GM12878 (cell line): ENCODE measurements at regions of chr1 and their contacts with region 1.

Region 1: DNA sequence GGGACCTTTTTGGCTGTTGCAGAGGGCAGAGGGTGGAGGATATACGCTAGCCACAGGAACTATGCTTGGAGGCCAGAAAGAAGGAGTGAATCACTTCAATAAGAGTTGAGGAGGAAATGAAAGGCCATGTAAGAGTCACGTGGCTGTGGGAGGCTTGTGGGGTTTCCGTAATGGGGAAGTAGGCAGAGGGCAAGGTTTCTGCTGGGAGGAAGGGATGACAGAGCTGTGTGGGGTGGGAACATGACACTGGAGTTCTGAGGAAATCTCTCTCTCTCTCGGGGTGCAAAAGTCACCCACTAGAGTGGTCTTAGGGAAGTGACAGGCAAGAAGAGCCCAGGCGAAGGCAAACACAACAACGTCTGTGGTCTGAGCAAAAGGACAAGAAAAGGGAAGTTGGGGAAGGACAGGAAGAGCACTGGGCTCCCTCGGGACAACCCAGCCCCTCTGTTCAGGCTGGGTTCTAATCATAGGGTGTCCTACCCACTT is 3.9 kb upstream of the CD1C start:
- DNase-seq: peak; percentile 79
- ATAC-seq: peak; percentile 75
- H3K4me3 ChIP-seq: no peak overlapping the region
- H3K27ac ChIP-seq: peak overlapping the region; percentile 88
- H3K4me1 ChIP-seq: peaks cover 57% of the 10 kb centered on the region
- H3K27me3 ChIP-seq: no peaks in the 10 kb centered on the region
- CTCF ChIP-seq: no peak
- EP300 ChIP-seq: peak; percentile 51 to 60; a peak in 1 of 4 replicates
- POLR2A ChIP-seq: peak; percentile 31; the same call in 1 of the 2 replicates
- RAD21 ChIP-seq: no peak

Region 2: DNA sequence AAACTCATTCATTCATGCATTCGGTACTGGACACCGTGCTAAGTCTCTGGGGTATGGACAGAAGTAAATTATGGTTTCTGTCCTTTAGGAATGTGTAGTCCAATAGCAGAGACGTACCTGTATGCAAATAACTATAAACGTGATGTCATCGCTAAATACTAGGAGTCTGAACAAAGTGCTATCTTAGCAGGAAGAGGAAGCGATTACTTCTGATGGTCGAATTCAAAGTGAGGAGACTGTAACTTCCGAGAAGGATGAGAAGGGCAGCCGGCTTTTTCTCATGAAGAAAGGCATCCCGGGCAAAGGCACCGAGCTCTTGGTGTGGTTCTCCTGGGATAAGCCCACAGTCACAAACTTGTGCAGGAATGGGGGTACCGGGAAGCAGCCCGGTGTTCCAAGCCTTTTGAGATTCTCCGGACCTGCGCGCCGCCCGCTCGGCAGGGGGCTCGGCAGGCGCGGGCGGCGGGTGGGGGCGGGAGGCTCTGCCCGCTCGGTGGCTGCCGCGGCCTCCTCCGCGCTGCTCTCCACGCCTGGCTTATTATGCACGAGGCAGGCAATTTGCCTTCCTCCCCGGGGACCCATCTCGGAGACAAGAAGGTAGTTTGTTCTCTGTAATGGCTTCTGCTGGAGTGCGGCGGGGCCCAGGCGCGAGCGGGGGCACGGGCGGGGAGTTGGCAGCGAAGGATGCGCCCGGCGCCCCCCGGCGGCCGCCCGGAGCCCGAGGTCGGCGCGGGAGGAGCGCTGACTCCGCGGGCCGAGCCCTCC is 172.6 kb before region 1 on chr1:
- CTCF ChIA-PET with region 1: no interaction called
- POLR2A ChIA-PET with region 1: no interaction called
- RAD21 ChIA-PET with region 1: no interaction called
- SMC1A ChIA-PET with region 1: no interaction called
- in situ Hi-C with region 1: no loop called
- intact Hi-C with region 1: no loop called
- DNase-seq: no peak
- ATAC-seq: peak; percentile 12; the same call in 1 of the 3 replicates
- H3K4me3 ChIP-seq: no peak overlapping the region
- H3K27ac ChIP-seq: no peak overlapping the region
- H3K4me1 ChIP-seq: no peaks in the 10 kb centered on the region
- H3K27me3 ChIP-seq: peaks cover 5 to 19% of the 10 kb centered on the region in 2 experiments
- CTCF ChIP-seq: no peak
- EP300 ChIP-seq: no peak
- POLR2A ChIP-seq: no peak
- RAD21 ChIP-seq: no peak

Region 3: DNA sequence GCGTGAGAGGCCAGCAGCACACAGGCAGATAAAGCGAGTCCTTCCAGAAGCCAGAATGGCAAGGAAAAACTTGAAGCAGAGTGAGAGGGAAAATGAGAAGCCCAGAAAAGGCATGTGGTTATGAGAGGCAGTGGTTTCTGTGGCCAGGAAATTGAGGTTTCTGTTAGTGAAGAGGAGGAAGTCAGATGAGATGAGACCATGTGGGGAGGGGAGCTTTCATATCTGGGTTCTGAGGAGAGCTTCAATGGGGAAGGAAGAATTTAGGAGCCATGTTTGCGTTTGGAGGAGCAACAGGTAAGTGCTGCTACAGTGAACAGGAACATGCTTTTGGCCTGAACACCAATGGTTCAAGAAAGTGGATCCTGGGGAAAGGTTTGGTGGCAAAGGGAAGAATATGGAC is 37.7 kb before region 1 on chr1:
- CTCF ChIA-PET with region 1: interaction called, 8 read pairs
- POLR2A ChIA-PET with region 1: interaction called, 5 read pairs
- RAD21 ChIA-PET with region 1: interaction called, 17 read pairs
- SMC1A ChIA-PET with region 1: interaction called, 7 read pairs
- in situ Hi-C with region 1: no loop called
- intact Hi-C with region 1: no loop called
- DNase-seq: peak; percentile 13
- ATAC-seq: peak; percentile 71
- H3K4me3 ChIP-seq: no peak overlapping the region
- H3K27ac ChIP-seq: no peak overlapping the region
- H3K4me1 ChIP-seq: peaks cover 9% of the 10 kb centered on the region
- H3K27me3 ChIP-seq: no peaks in the 10 kb centered on the region
- CTCF ChIP-seq: no peak
- EP300 ChIP-seq: no peak
- POLR2A ChIP-seq: no peak
- RAD21 ChIP-seq: no peak

Region 4: DNA sequence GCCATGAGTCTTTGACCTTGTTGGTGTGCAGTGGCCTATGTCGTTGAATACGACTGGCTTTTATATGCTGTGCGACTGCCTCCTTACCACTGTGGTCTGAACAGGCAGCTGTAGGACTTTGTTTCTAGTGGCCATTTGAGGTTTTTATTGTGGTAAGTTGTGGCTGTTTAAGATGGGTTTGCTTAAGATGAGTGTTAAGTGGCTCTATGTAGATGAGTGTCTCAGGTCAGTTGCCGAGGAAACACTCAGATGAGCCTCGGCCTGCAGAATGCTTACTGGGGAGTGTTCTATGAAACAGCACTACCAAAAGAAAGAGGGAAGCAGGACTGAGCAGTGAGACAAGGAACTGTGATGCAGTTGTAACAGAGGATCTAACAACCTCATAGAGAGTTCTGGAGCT is 11.0 kb before region 1 on chr1:
- CTCF ChIA-PET with region 1: interaction called, 9 read pairs
- POLR2A ChIA-PET with region 1: no interaction called
- RAD21 ChIA-PET with region 1: interaction called, 29 read pairs
- SMC1A ChIA-PET with region 1: interaction called, 31 read pairs
- in situ Hi-C with region 1: no loop called
- intact Hi-C with region 1: no loop called
- DNase-seq: no peak
- ATAC-seq: peak; percentile 94
- H3K4me3 ChIP-seq: no peak overlapping the region
- H3K27ac ChIP-seq: no peak overlapping the region
- H3K4me1 ChIP-seq: no peaks in the 10 kb centered on the region; the same call in 1 of the 2 replicates
- H3K27me3 ChIP-seq: no peaks in the 10 kb centered on the region
- CTCF ChIP-seq: no peak
- EP300 ChIP-seq: no peak
- POLR2A ChIP-seq: no peak
- RAD21 ChIP-seq: no peak

Region 5: DNA sequence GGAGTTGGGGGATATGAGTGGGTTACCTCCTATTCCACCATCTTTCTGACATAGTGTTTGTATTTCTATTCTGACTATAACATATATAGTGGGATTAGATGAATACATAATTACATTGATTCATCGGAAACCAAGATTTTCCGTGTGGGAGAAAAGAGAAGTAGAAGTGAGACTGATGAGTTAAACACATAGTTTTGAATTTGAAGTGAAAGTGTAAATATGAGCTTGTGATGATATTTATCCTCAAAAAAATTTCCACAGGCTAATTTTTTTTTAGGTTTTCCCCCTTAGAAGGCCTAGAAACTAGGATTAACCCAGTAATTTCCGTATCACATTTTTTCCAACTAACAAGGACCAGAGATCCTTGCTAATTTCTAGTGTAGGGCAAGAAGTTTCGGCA is 38.6 kb after region 1 on chr1:
- CTCF ChIA-PET with region 1: interaction called, 16 read pairs
- POLR2A ChIA-PET with region 1: no interaction called
- RAD21 ChIA-PET with region 1: interaction called, 11 read pairs
- SMC1A ChIA-PET with region 1: interaction called, 15 read pairs
- in situ Hi-C with region 1: no loop called
- intact Hi-C with region 1: no loop called
- DNase-seq: no peak
- ATAC-seq: peak; percentile 47
- H3K4me3 ChIP-seq: no peak overlapping the region
- H3K27ac ChIP-seq: no peak overlapping the region
- H3K4me1 ChIP-seq: peaks cover 9% of the 10 kb centered on the region
- H3K27me3 ChIP-seq: no peaks in the 10 kb centered on the region
- CTCF ChIP-seq: no peak
- EP300 ChIP-seq: no peak; a peak in 1 of 4 replicates
- POLR2A ChIP-seq: no peak
- RAD21 ChIP-seq: no peak

Region 6: DNA sequence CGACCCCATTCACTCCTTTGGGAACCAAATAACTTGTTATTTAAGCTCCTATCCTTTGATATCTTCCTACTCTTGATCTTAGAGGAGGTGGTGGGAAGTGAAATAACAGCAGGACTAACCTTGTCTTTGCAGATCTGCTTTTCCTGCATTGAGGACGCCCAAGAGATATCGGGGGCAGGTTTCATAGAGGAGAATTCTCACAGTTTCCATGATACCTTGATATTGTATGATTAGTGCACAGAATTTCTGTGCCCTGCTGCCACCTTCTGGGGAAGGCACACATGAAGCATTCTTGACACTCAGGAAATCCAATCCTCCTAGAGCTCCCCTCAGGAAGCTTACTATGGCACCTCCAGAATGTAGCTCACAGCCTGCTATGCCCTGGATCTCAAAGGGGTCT is 43.9 kb after region 1 on chr1:
- CTCF ChIA-PET with region 1: interaction called, 16 read pairs
- POLR2A ChIA-PET with region 1: no interaction called
- RAD21 ChIA-PET with region 1: interaction called, 11 read pairs
- SMC1A ChIA-PET with region 1: interaction called, 15 read pairs
- in situ Hi-C with region 1: no loop called
- intact Hi-C with region 1: no loop called
- DNase-seq: no peak
- ATAC-seq: peak; percentile 84
- H3K4me3 ChIP-seq: no peak overlapping the region
- H3K27ac ChIP-seq: no peak overlapping the region
- H3K4me1 ChIP-seq: peaks cover 5% of the 10 kb centered on the region
- H3K27me3 ChIP-seq: no peaks in the 10 kb centered on the region
- CTCF ChIP-seq: peak; percentile 61 to 69 (median 63)
- EP300 ChIP-seq: no peak
- POLR2A ChIP-seq: no peak
- RAD21 ChIP-seq: peak; percentile 80

Region 7: GRCh38 chr1:158485455-158485854 is 199.7 kb after region 1 on chr1:
- CTCF ChIA-PET with region 1: no interaction called
- POLR2A ChIA-PET with region 1: no interaction called
- RAD21 ChIA-PET with region 1: no interaction called
- SMC1A ChIA-PET with region 1: no interaction called
- in situ Hi-C with region 1: no loop called
- intact Hi-C with region 1: no loop called
- DNase-seq: no peak
- ATAC-seq: no peak
- H3K4me3 ChIP-seq: no peak overlapping the region
- H3K27ac ChIP-seq: no peak overlapping the region
- H3K4me1 ChIP-seq: no peaks in the 10 kb centered on the region
- H3K27me3 ChIP-seq: no peaks in the 10 kb centered on the region
- CTCF ChIP-seq: no peak
- EP300 ChIP-seq: no peak
- POLR2A ChIP-seq: no peak
- RAD21 ChIP-seq: no peak

Region 8: DNA sequence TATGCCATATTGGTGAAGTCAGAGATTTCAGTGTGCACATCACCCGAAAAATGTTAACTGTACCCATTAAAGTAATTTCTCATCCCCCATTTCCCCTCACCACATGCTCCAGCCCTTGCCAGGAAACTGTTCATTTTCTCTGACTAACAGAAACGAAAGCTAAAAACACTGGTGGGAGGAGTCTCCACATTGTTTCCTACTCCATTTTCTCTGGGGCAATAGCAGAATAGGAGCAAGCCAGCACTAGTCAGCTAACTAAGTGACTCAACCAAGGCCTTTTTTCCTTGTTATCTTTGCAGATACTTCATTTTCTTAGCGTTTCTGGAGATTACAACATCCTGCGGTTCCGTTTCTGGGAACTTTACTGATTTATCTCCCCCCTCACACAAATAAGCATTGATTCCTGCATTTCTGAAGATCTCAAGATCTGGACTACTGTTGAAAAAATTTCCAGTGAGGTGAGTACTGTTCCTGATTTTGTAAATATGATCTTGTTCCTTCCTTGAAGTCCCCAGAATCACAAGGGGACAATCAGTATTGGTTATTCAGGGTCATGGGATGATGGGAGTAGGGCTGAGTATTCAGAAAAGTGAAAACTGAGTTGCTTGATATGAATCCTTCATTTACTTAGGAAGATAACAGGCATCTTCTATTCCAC is 724.0 kb after region 1 on chr1 and contains the start of gene IFI16:
- CTCF ChIA-PET with region 1: no interaction called
- POLR2A ChIA-PET with region 1: no interaction called
- RAD21 ChIA-PET with region 1: no interaction called
- SMC1A ChIA-PET with region 1: no interaction called
- in situ Hi-C with region 1: loop called (anchors 10 kb)
- intact Hi-C with region 1: loop called (anchors 2 kb)
- DNase-seq: peak; percentile 87
- ATAC-seq: peak; percentile 73
- H3K4me3 ChIP-seq: peak within 1 kb of the TSS; percentile 91
- H3K27ac ChIP-seq: peak within 1 kb of the TSS; percentile 100
- H3K4me1 ChIP-seq: peaks cover 15% of the 10 kb centered on the region; the same call in 1 of the 2 replicates
- H3K27me3 ChIP-seq: no peaks in the 10 kb centered on the region
- CTCF ChIP-seq: no peak
- EP300 ChIP-seq: peak; percentile 25 to 37; a peak in 1 of 4 replicates
- POLR2A ChIP-seq: peak; percentile 80
- RAD21 ChIP-seq: no peak
- polyA plus RNA-seq, gene IFI16: 191 to 255 TPM

Region 9: GRCh38 chr1:159077120-159077961 is 791.5 kb after region 1 on chr1:
- CTCF ChIA-PET with region 1: interaction called, 4 read pairs
- POLR2A ChIA-PET with region 1: interaction called, 3 read pairs
- RAD21 ChIA-PET with region 1: interaction called, 5 read pairs
- SMC1A ChIA-PET with region 1: interaction called, 4 read pairs
- in situ Hi-C with region 1: no loop called
- intact Hi-C with region 1: loop called (anchors 2 kb)
- DNase-seq: peak; percentile 94
- ATAC-seq: peak; percentile 74
- H3K4me3 ChIP-seq: peak overlapping the region; percentile 64
- H3K27ac ChIP-seq: peak overlapping the region; percentile 89
- H3K4me1 ChIP-seq: peaks cover 11% of the 10 kb centered on the region
- H3K27me3 ChIP-seq: no peaks in the 10 kb centered on the region
- CTCF ChIP-seq: no peak
- EP300 ChIP-seq: peak; percentile 44 to 47; a peak in 2 of 4 replicates
- POLR2A ChIP-seq: peak; percentile 56; the same call in 1 of the 2 replicates
- RAD21 ChIP-seq: no peak